ENCODE measurements at regions of chr15 and their contacts with region 1.

Region 1: GRCh38 chr15:57213862-57214261 is 162.4 kb upstream of the CGNL1 start:
- DNase-seq: no peak
- H3K4me3 ChIP-seq: no peak overlapping the region
- H3K27ac ChIP-seq: no peak overlapping the region
- H3K4me1 ChIP-seq: peaks cover 57% of the 10 kb centered on the region
- H3K27me3 ChIP-seq: no peaks in the 10 kb centered on the region
- CTCF ChIP-seq: peak; percentile 72

Region 2: GRCh38 chr15:57146506-57147201 is 67.2 kb before region 1 on chr15:
- intact Hi-C with region 1: loop called (anchors 5 kb)
- DNase-seq: no peak
- H3K4me3 ChIP-seq: peak overlapping the region; percentile 47
- H3K27ac ChIP-seq: peak overlapping the region; percentile 67
- H3K4me1 ChIP-seq: peaks cover 44% of the 10 kb centered on the region
- H3K27me3 ChIP-seq: no peaks in the 10 kb centered on the region
- CTCF ChIP-seq: peak; percentile 88

Measured in left ventricle myocardium inferior (tissue), 1 donor.